ENCODE measurements at regions of chr11 and their contacts with region 1.

Region 1: DNA sequence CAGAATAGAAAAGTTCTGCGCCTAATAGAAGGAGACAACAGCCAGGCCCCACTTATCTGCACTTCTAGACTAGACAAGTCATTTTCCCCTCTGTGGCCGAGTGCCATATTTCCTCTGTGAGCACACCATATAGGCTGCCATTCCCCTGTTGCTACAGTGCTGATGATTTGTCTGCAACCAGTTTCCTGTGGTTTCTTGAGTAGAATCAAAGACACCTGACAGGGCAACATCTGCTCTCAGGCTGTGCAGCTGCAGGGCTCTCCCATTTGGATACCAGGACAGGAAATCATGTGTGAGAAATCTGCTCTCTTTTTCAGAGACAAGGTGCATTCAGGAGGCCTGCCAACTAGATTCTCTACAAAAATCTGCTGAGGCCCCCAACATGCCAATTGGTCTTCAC is 879.3 kb downstream of the DLG2 start:
- DNase-seq: no peak
- H3K4me3 ChIP-seq: no peak overlapping the region
- H3K27ac ChIP-seq: no peak overlapping the region
- H3K4me1 ChIP-seq: no peaks in the 10 kb centered on the region
- H3K27me3 ChIP-seq: no peaks in the 10 kb centered on the region
- CTCF ChIP-seq: no peak
- POLR2A ChIP-seq: no peak

Region 2: GRCh38 chr11:84804041-84804440 is 56.2 kb after region 1 on chr11:
- intact Hi-C with region 1: no loop called
- DNase-seq: no peak
- H3K4me3 ChIP-seq: no peak overlapping the region
- H3K27ac ChIP-seq: no peak overlapping the region
- H3K4me1 ChIP-seq: no peaks in the 10 kb centered on the region
- H3K27me3 ChIP-seq: no peaks in the 10 kb centered on the region
- CTCF ChIP-seq: no peak
- POLR2A ChIP-seq: no peak

Region 3: DNA sequence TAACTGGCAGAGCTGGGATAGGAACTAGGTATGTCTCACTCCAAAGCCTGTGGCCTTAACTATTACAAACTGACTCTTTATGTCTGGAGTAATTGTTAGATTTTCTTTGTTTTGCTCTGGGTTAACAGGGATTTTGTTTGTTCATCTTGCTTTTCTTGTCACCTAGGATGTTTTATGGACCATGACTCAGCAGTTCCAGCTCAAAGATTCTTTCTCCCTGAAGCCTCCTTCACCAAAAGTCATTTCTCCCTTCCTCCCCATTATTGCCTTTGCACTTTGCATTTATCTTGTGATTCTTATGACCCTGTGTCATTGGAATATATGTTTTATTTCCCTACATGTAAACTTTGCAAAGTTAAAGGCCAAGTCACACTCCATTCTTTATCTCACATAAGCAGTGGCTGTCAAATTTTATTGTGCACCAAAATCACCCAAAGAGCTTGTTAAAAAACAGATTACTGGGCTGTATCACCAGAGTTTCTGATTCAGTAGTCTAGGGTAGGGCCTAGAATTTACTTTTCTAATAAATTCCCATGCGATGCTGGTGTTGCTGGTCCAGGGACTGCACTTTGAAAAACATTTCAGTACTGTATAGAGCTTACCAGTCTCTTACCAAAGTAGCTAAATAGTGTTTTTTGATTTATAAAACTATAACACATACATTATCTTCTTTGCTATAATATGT is 551.5 kb after region 1 on chr11:
- intact Hi-C with region 1: no loop called
- DNase-seq: no peak
- H3K4me3 ChIP-seq: no peak overlapping the region
- H3K27ac ChIP-seq: no peak overlapping the region
- H3K4me1 ChIP-seq: no peaks in the 10 kb centered on the region
- H3K27me3 ChIP-seq: no peaks in the 10 kb centered on the region
- CTCF ChIP-seq: no peak
- POLR2A ChIP-seq: no peak

Region 4: GRCh38 chr11:85394283-85394682 is 646.4 kb after region 1 on chr11:
- intact Hi-C with region 1: loop called (anchors 5 kb)
- DNase-seq: no peak
- H3K4me3 ChIP-seq: no peak overlapping the region
- H3K27ac ChIP-seq: no peak overlapping the region
- H3K4me1 ChIP-seq: no peaks in the 10 kb centered on the region
- H3K27me3 ChIP-seq: no peaks in the 10 kb centered on the region
- CTCF ChIP-seq: no peak
- POLR2A ChIP-seq: no peak